ENCODE measurements at regions of chr10 and their contacts with region 1.

Region 1: DNA sequence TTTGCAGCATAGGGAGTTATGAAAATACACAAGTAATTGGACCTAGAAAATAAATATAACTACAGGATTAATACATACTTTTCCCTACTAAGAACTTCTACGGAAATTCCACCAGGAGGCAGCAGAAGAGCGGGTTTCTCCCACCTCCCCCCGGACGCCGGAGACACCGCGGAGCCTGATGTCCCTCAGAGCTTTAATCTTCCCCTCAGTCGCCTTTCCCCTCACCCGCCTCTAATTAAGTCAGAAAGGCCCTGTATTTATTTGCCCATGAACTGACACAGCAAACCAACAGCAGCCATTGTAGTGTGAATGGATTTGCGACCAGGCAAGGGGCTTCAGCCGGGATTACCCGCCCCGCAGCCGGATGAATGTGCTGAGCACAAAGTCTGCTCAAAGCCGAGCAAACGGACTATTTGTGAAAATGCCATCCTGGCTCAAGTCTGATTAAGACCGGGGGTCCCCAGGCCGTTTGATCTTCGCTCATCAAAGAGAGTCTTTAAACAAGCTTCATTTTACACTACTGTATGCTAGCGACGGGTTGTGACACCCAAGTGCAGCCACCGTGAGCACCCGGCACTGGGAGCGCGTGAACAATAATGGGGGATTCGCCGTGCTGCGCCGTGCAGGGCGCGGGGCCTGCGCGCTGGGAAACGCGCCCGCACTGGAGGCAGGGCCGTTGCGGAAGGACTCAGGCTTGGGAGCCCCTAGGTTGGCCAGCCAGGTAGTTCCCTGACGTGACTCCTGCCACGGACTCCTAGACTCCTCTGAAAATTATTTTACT is 5.6 kb upstream of the DKK1 start:
- DNase-seq: no peak
- H3K4me3 ChIP-seq: peak overlapping the region; percentile 49
- CTCF ChIP-seq: peak; percentile 60

Region 2: GRCh38 chr10:52488606-52489485 is 180.4 kb after region 1 on chr10:
- CTCF ChIA-PET with region 1: interaction called, 462 read pairs
- POLR2A ChIA-PET with region 1: interaction called, 110 read pairs
- DNase-seq: no peak
- H3K4me3 ChIP-seq: no peak overlapping the region
- CTCF ChIP-seq: peak; percentile 14

Region 3: GRCh38 chr10:52566471-52567246 is 258.2 kb after region 1 on chr10:
- CTCF ChIA-PET with region 1: interaction called, 262 read pairs
- POLR2A ChIA-PET with region 1: no interaction called
- DNase-seq: no peak
- H3K4me3 ChIP-seq: no peak overlapping the region
- CTCF ChIP-seq: peak; percentile 13

Region 4: DNA sequence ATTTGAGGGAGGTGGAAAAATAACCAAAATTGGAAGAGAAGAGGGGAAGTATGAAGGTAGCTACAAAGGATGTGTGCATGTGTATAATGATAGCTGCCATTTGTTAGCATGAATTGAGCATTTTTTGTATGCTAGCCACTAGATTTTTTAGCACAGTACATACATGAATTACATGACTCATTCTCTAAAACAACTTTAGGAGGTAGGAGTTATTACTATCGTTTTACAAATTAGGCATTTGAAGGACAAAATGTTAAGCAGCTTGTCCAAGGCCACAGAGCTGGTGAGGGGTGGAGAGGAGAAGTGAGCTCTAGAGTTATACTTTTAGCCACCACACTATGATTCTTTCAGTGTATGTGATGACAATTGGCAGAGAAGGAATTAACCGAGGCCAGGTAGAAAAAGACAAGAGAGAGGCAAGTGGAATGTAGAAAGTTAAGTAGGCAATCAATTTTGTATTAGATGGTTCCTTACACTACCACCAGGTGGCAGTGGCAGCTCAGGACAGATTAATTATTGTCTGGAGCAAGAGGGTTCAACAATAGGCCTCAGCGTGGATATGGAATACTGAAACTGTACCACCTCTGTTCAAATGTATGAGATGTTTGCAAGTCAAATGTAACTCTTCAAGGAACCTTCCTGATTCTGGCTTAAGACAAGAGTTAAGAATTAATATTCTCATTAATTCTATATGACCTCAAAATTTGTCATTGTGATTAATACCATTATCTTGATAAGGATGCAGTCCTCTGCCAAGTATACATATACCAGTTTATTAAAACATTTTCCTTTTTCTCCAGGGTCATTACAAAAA is 336.1 kb after region 1 on chr10:
- CTCF ChIA-PET with region 1: interaction called, 34 read pairs
- POLR2A ChIA-PET with region 1: no interaction called
- DNase-seq: no peak
- H3K4me3 ChIP-seq: no peak overlapping the region
- CTCF ChIP-seq: peak; percentile 64

Region 5: DNA sequence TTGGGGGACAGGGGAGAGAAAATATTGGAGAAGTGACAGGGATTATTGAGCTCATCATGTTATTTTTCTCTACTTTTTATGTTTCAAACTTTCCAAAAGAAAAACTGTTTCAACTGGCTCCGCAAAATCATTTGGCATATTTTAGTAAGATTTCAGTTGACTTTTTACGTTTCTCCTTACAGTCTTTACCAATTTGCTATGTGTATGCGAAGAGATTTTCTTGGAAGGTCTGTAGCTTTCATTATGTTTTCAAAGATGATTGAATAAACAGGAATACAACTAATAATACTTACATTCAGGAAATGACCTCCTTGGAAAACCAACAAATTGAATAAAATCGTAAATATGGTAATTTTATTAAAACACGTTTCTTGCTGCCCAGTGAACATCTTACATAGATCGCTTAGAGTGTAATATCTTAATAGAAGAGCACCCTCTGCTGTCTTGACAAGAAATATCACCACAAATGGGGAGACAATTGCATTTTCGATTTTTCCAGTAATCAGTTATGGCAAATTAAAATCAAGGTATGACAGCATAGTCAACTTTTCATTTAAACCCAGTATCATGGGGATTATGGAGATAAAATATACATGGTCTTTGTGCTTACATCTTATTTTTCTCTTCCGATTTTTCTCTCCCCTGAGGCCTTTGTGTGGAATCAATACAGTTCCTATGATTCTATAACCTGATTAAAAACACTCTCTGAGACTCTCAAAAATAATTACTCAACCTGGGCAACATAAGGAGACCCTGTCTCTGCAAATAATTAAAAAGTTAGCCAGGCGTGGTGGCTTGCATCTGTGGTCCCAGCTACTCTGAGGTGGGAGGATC is 421.0 kb after region 1 on chr10:
- CTCF ChIA-PET with region 1: interaction called, 27 read pairs
- POLR2A ChIA-PET with region 1: no interaction called
- DNase-seq: no peak
- H3K4me3 ChIP-seq: no peak overlapping the region
- CTCF ChIP-seq: peak; percentile 42

Region 6: GRCh38 chr10:52746169-52746568 is 437.7 kb after region 1 on chr10:
- CTCF ChIA-PET with region 1: interaction called, 18 read pairs
- POLR2A ChIA-PET with region 1: no interaction called
- DNase-seq: no peak
- H3K4me3 ChIP-seq: no peak overlapping the region
- CTCF ChIP-seq: peak; percentile 47

Measured in AG04449 (cell line).